Aorta (tissue), 5 donors: ENCODE measurements at regions of chr18 and their contacts with region 1.

Region 1: GRCh38 chr18:56638271-56639093 is at the start of gene TXNL1:
- DNase-seq: peak; percentile 100
- ATAC-seq: peak; percentile 100
- H3K4me3 ChIP-seq: peak within 1 kb of the TSS; percentile 93 to 98
- H3K27ac ChIP-seq: peak within 1 kb of the TSS; percentile 80 to 90
- H3K4me1 ChIP-seq: peaks cover 0 to 3% of the 10 kb centered on the region in 2 donors
- H3K27me3 ChIP-seq: no peaks in the 10 kb centered on the region
- total RNA-seq, gene TXNL1: 44.7 to 49.6 TPM

Region 2: GRCh38 chr18:56650944-56651770 is 12.7 kb after region 1 on chr18 and contains the start of gene WDR7:
- intact Hi-C with region 1: loop called in 1 of 2 experiments (anchors 1 kb)
- DNase-seq: peak; percentile 98
- ATAC-seq: peak; percentile 99
- H3K4me3 ChIP-seq: peak within 1 kb of the TSS; percentile 90 to 91
- H3K27ac ChIP-seq: peak within 1 kb of the TSS in 1 of 2 donors; percentile 82
- H3K4me1 ChIP-seq: peaks cover 1 to 3% of the 10 kb centered on the region in 2 donors
- H3K27me3 ChIP-seq: no peaks in the 10 kb centered on the region
- total RNA-seq, gene WDR7: 32.7 to 46.6 TPM